ENCODE measurements at regions of chr9 and their contacts with region 1.

Region 1: GRCh38 chr9:105447814-105448812 is at the start of gene FSD1L:
- DNase-seq: peak; percentile 94 to 98 (median 97)
- ATAC-seq: peak; percentile 92 to 98 (median 97)
- H3K4me3 ChIP-seq: peak within 1 kb of the TSS; percentile 69 to 99 (median 84)
- H3K27ac ChIP-seq: peak within 1 kb of the TSS; percentile 45 to 93 (median 80)
- H3K4me1 ChIP-seq: peaks cover 0 to 43% (median 17%) of the 10 kb centered on the region in 12 donors
- H3K27me3 ChIP-seq: no peaks in the 10 kb centered on the region
- CTCF ChIP-seq: peak in 10 of 12 donors; percentile 27 to 50 (median 36)
- POLR2A ChIP-seq: peak in 1 of 2 donors; percentile 63
- total RNA-seq, gene FSD1L: 3.7 to 14.0 (median 8.7) TPM

Region 2: DNA sequence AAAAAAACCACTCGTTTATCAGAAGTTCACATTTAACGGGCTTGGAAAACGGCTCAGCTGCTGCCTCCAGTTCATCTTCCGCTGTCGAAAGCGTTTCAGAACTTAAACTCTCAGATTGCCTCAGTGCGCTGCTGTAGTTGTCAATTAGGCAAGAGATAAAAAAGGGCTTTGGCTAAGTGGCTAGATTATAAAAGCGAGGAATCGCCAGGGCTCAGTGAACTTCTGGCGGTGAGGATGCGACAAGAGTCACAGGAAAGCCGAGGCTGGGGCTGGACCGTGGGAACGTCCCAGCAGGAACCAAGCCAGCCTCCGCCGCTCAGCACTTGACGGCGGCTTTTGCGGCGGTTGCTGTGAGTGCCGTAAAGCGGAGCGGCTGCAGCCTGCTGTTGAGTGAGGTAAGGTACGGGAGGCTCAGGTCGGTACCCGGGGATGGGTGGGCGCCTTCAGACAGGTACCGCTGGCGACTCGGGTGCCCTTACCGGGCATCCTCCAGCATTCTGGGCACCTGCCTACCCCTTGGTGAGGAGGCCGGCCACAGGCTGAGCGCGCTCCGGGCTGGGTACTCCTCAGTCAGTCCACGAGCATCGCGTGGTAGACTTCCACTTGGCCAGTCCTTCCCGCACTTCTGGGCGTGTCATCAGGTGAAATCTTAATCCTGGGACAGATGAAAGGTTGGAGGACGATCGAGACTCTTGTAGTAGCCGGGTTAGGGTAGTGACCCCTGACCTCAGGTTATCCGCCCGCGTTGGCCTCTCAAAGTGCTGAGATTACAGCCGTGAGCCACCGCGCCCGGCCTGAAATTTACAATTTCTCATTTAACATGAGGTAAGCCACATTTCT is 109.9 kb after region 1 on chr9 and contains the start of gene FKTN:
- intact Hi-C with region 1: loop called in 1 of 10 experiments (anchors 5 kb)
- DNase-seq: peak; percentile 89 to 94 (median 92)
- ATAC-seq: peak; percentile 90 to 98 (median 98)
- H3K4me3 ChIP-seq: peak within 1 kb of the TSS; percentile 62 to 97 (median 82)
- H3K27ac ChIP-seq: peak within 1 kb of the TSS; percentile 42 to 87 (median 74)
- H3K4me1 ChIP-seq: peaks cover 0 to 13% (median 8%) of the 10 kb centered on the region in 12 donors
- H3K27me3 ChIP-seq: no peaks in the 10 kb centered on the region
- CTCF ChIP-seq: no peak
- POLR2A ChIP-seq: peak in 1 of 2 donors; percentile 40
- total RNA-seq, gene FKTN: 3.5 to 12.9 (median 7.2) TPM

Measured in heart left ventricle (tissue), 16 donors.